Activated naive CD4-positive, alpha-beta T cell treated with anti-CD3 and anti-CD28 coated beads for 36 hours (primary cell): ENCODE measurements at regions of chr11 and their contacts with region 1.

Region 1: GRCh38 chr11:34214961-34215805 is 109.8 kb downstream of the NAT10 start:
- DNase-seq: peak; percentile 96
- H3K4me3 Mint-ChIP-seq: peak overlapping the region; percentile 28
- H3K27ac Mint-ChIP-seq: peak overlapping the region; percentile 83
- H3K4me1 Mint-ChIP-seq: peaks cover 29% of the 10 kb centered on the region
- H3K27me3 Mint-ChIP-seq: no peaks in the 10 kb centered on the region

Region 2: DNA sequence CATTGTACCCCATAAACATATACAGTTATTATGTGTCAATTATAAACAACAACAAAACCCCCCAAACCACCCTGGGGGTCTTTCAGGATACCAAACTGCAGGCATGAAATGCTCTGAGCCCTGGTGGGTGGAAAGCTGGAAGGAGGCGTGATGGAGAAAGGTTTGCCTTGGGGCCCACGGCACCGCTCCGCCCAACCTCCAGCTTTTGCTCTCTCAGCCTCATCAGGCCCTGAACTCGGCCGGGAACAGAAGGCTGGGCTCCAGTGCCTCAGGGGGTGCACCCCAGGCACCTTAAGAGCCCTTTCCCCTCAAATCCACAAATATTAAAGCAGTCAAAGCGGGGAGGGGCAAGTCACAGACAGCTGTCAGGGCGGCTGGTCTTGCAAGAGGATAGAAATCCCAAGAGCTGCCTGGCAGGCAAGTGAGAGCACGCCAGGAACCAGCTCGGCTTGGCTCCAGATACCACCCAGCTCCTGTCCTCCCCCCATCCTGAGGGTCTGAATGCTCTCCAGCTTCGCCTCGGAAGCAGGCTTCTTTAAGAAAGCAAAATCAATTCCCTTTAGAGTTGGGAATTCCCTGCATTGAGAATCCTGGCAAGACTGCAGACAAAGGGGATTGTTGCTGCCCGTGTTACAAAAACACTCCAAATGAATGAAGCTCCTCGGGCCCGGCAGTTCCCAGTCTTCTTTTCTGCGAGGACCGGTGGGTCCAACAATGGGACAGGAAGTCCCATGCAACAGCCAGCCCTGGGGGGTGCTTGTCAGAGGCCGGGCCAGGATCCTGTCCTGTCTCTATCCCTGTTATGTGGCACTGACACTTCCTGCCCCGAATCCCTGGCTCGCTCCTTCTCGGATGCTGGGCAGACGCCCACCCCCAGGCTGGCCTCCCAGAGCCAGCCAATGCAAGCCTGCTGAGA is 29.0 kb before region 1 on chr11:
- CTCF ChIA-PET with region 1: interaction called, 5 read pairs
- intact Hi-C with region 1: loop called (anchors 2 kb)
- DNase-seq: no peak
- H3K4me3 Mint-ChIP-seq: no peak overlapping the region
- H3K27ac Mint-ChIP-seq: no peak overlapping the region
- H3K4me1 Mint-ChIP-seq: peaks cover 15% of the 10 kb centered on the region
- H3K27me3 Mint-ChIP-seq: no peaks in the 10 kb centered on the region

Region 3: GRCh38 chr11:34243726-34244464 is 28.7 kb after region 1 on chr11:
- CTCF ChIA-PET with region 1: interaction called, 3 read pairs
- intact Hi-C with region 1: loop called (anchors 1 kb)
- DNase-seq: peak; percentile 77
- H3K4me3 Mint-ChIP-seq: no peak overlapping the region
- H3K27ac Mint-ChIP-seq: peak overlapping the region; percentile 46
- H3K4me1 Mint-ChIP-seq: peaks cover 78% of the 10 kb centered on the region
- H3K27me3 Mint-ChIP-seq: peaks cover 2% of the 10 kb centered on the region

Region 4: GRCh38 chr11:34250732-34251639 is 35.8 kb after region 1 on chr11:
- CTCF ChIA-PET with region 1: no interaction called
- intact Hi-C with region 1: loop called (anchors 1 kb)
- DNase-seq: peak; percentile 84
- H3K4me3 Mint-ChIP-seq: peak overlapping the region; percentile 20
- H3K27ac Mint-ChIP-seq: no peak overlapping the region
- H3K4me1 Mint-ChIP-seq: peaks cover 52% of the 10 kb centered on the region
- H3K27me3 Mint-ChIP-seq: peaks cover 12% of the 10 kb centered on the region

Region 5: DNA sequence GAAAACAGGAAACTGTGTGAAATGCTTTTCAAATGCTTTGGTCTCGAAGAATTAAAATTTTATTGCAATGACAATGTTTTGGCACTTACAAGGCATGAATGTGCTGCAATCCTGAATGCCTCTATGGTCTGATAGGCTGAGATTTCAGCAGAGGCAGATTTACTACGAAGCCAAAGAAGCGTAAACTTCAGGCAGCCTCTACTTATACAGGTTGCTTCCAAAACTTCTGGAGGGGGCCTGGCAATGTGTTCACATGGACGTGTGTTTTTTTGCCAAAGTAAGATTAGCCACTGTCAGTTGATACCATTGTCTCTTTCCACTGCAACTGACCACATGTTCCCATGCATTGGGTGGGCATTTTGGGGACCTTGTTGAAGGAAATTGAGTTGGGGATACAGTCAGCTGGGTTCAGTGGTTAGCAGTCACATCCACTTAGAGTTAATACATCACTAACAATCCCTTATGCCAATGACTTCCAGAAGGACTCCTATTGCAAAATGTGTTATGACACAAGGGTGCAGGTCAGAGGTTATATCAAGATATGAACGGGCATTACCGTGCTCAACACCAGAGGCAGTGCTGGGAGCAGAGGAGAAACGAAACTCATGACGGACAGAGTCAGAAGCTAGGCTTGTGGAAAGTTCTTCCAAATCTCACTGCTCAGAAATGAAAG is 93.9 kb after region 1 on chr11:
- CTCF ChIA-PET with region 1: no interaction called
- intact Hi-C with region 1: loop called (anchors 1 kb)
- DNase-seq: peak; percentile 10
- H3K4me3 Mint-ChIP-seq: no peak overlapping the region
- H3K27ac Mint-ChIP-seq: no peak overlapping the region
- H3K4me1 Mint-ChIP-seq: peaks cover 35% of the 10 kb centered on the region
- H3K27me3 Mint-ChIP-seq: no peaks in the 10 kb centered on the region

Region 6: GRCh38 chr11:34335331-34335730 is 120.1 kb after region 1 on chr11:
- CTCF ChIA-PET with region 1: no interaction called
- intact Hi-C with region 1: loop called (anchors 1 kb)
- DNase-seq: peak; percentile 16
- H3K4me3 Mint-ChIP-seq: no peak overlapping the region
- H3K27ac Mint-ChIP-seq: no peak overlapping the region
- H3K4me1 Mint-ChIP-seq: peaks cover 33% of the 10 kb centered on the region
- H3K27me3 Mint-ChIP-seq: peaks cover 12% of the 10 kb centered on the region